ENCODE measurements at regions of chr16 and their contacts with region 1.

Region 1: GRCh38 chr16:68289621-68290329 is 21.0 kb downstream of the SLC7A6OS start:
- DNase-seq: peak; percentile 74
- ATAC-seq: peak; percentile 74
- H3K4me3 Mint-ChIP-seq: peak overlapping the region; percentile 30
- H3K27ac Mint-ChIP-seq: peak overlapping the region; percentile 84
- H3K4me1 Mint-ChIP-seq: peaks cover 83% of the 10 kb centered on the region
- H3K27me3 Mint-ChIP-seq: no peaks in the 10 kb centered on the region

Region 2: DNA sequence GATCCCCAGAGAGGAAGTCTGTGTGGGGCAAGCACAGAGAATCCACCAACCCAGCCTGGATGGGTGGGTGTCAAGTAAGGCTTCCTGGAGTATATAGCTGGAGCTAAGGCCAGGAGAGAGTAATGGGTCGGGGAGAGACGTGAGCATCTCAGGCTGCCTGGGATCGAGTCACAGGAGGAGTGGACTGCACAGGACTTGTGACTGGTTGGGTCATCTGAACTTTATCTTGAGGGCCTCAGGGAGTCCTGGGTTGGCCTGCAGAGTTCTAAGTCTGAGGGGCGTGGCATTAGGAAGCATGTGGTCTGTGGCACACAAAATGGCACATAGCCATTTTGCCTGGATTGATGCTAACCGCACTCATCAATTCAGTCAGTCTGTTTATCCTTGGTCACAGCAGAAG is 43.1 kb before region 1 on chr16:
- CTCF ChIA-PET with region 1: no interaction called
- POLR2A ChIA-PET with region 1: no interaction called
- DNase-seq: no peak
- ATAC-seq: no peak
- H3K4me3 Mint-ChIP-seq: no peak overlapping the region
- H3K27ac Mint-ChIP-seq: no peak overlapping the region
- H3K4me1 Mint-ChIP-seq: peaks cover 27% of the 10 kb centered on the region
- H3K27me3 Mint-ChIP-seq: no peaks in the 10 kb centered on the region

Region 3: DNA sequence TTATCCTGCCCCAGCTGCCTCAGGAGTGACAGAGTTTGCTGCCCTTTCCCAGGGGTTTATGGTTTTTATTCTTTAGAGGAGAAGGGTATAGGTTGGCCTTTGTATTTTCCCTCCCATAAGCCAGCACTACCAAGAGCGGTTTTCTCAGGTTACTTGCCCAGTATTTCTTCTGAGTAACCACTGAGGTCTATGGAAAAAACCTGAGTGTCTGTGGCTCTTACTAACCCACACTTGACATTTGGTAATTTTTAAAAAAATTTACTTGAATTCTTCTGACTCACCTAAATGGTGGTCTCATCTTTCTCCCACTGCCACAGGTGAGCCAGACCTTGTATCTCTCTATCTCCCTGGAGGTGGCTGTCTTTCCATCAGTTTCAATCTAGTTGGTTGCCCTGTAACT is 19.4 kb before region 1 on chr16:
- CTCF ChIA-PET with region 1: interaction called, 346 read pairs
- POLR2A ChIA-PET with region 1: interaction called, 55 read pairs
- DNase-seq: no peak
- ATAC-seq: peak; percentile 20
- H3K4me3 Mint-ChIP-seq: no peak overlapping the region
- H3K27ac Mint-ChIP-seq: peak overlapping the region; percentile 67
- H3K4me1 Mint-ChIP-seq: peaks cover 85% of the 10 kb centered on the region
- H3K27me3 Mint-ChIP-seq: no peaks in the 10 kb centered on the region

Region 4: GRCh38 chr16:68275611-68276191 is 14.1 kb before region 1 on chr16:
- CTCF ChIA-PET with region 1: interaction called, 30 read pairs
- POLR2A ChIA-PET with region 1: interaction called, 9 read pairs
- DNase-seq: peak; percentile 67
- ATAC-seq: peak; percentile 82
- H3K4me3 Mint-ChIP-seq: peak overlapping the region; percentile 65
- H3K27ac Mint-ChIP-seq: peak overlapping the region; percentile 89
- H3K4me1 Mint-ChIP-seq: peaks cover 72% of the 10 kb centered on the region
- H3K27me3 Mint-ChIP-seq: no peaks in the 10 kb centered on the region

Region 5: DNA sequence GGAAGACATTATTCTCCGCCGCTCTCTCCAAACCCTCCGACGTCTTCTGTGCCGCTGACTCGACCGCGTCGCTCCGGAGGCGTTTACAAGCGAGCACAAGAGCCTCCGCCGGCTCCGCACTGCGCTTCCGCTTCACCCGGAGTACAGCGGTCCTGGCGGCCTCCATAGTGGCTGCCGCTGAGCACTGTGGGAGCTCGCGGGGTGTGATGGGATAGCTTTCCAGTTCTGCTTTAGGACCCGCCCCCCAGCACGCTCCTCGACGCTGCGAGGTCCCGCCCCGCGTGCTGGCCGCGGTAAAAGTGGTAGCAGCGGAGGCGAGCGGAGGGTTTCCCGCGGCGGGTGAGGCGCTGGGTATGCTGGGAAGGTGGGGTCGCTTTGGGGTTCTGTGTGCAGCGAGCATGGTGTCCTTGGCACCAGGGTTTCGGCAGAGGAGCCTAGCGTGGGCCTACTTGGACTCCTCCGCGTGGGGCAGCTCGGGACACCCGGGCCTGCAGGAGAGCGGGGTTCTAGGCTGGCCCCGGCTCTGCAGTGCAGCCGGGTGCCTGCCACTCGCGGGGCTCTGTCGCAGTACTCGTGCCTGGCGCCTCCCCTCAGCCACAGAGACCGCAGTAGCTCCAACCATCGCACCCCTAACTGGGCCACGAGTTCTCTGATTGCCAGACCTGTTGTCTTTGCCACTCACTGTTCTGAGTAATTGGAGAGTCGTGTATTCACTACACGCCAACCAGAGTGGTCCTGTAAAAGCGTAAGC is 21.2 kb after region 1 on chr16 and contains the starts of genes PRMT7 and SLC7A6OS:
- CTCF ChIA-PET with region 1: interaction called, 11 read pairs
- POLR2A ChIA-PET with region 1: interaction called, 21 read pairs
- DNase-seq: peak; percentile 96
- ATAC-seq: peak; percentile 99
- H3K4me3 Mint-ChIP-seq: peak within 1 kb of the TSS; percentile 89
- H3K27ac Mint-ChIP-seq: peak within 1 kb of the TSS; percentile 88
- H3K4me1 Mint-ChIP-seq: peaks cover 44% of the 10 kb centered on the region
- H3K27me3 Mint-ChIP-seq: no peaks in the 10 kb centered on the region
- total RNA-seq, gene PRMT7: 70.4 to 73.2 TPM
- total RNA-seq, gene SLC7A6OS: 26.3 to 30.7 TPM